ENCODE measurements at regions of chr10 and their contacts with region 1.

Region 1: DNA sequence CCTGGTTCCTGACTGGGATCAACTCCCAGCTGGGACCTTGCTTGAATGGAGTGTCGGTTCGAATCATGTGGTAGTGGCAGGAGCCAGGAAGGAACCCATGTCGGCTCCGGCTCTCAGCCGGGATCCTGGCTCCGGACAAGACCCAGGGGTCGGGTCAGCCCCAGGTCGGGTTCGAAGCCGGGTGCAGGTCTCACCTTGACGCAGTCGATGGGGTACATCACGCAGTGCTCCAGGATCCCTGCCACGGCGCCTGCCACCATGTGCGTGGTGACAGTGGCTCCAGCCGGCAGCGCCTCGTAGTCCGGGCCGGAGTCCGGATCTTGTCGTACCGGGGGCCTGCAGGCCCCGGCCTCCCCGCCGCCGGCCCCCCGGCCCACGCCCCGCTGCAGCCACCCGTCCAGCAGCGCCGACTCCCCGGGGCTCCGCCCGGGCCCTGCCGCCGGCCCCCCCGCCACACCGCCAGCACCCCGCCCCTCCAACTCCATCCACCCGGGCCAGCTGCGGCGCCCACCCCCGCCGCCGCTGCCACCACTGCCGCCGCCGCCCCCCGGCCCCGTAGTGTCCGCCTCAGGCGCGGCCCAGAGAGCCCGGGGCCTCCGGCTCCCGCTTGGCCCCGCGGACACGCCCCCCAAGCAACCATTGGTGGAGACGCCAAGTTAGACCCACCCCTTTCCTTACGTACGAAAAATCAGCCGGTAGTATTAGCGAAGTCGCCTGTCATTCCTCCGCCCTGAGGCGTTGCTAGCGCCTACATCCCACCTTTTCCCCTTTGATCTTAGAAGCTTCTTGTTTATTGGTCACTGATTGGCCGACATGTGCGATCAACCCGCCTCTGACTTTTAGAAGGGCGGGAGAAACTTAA is at the start of gene SLC25A28:
- DNase-seq: peak; percentile 95
- CTCF ChIP-seq: no peak

Region 2: DNA sequence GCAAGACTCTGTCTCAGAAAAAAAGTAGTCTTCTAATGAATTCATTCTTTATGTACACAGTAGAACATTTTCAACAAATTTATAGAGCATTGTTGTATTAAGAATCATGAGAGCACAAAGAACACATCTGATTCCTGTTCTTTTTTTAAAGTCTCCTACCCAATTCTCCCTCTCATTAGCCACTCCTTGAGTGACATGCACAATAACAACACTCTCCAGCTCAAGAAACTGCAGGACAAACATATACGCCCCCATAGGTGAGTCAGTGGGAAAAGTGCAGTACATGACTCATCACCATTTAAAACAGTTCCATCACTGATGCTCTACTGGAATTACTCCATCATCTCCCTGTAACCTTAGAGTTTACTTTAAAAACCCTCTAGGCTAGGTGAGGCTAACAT is 479.1 kb before region 1 on chr10:
- in situ Hi-C with region 1: no loop called
- DNase-seq: no peak
- CTCF ChIP-seq: no peak

Region 3: GRCh38 chr10:99395750-99396445 is 224.2 kb before region 1 on chr10:
- in situ Hi-C with region 1: loop called (anchors 10 kb)
- DNase-seq: no peak
- CTCF ChIP-seq: no peak

Region 4: DNA sequence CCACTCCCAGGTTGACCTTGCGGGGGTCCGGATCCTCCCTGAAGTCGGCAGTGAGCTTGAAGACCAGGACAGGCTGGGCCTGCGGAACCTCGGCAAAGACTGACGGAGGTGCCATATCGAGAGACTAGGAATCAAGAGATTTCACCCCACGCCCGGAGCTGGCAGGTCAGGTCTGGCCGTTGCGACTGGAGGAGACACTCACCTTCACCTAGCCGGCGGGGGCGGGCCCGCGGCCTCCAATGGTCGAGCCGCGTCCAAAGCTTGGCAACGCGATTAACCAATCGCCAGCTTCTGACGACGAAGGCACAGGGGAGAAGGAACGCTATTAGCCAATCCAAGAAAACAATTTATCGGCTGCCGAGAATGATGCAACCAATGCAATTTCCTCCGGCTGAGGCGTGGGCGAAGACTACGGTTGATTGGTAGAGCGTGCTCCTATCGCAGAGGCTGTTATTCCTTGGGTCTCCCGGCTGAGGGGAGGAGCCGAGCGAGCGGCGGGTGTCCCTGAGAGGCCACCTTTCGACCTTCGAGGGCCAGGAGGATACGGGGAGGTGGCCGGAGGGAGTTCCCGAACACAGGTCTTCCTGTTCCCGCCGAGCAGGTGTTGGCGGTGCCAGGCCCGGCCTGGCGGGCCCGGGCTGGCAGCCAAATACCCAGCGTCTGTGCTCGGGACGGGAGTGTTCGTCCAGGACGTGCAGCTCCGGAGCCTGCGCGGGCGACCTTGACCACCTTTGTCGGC is 189.5 kb before region 1 on chr10 and contains the start of gene GOT1:
- in situ Hi-C with region 1: loop called (anchors 10 kb)
- DNase-seq: peak; percentile 99
- CTCF ChIP-seq: peak; percentile 0

Region 5: GRCh38 chr10:99560277-99561126 is 59.6 kb before region 1 on chr10:
- in situ Hi-C with region 1: loop called (anchors 10 kb)
- DNase-seq: peak; percentile 50
- CTCF ChIP-seq: peak; percentile 58

Region 6: GRCh38 chr10:99827936-99828335 is 207.9 kb after region 1 on chr10:
- in situ Hi-C with region 1: no loop called
- DNase-seq: no peak
- CTCF ChIP-seq: no peak

Region 7: GRCh38 chr10:99906470-99906869 is 286.4 kb after region 1 on chr10:
- in situ Hi-C with region 1: no loop called
- DNase-seq: no peak
- CTCF ChIP-seq: no peak

Measured in GM13976 (cell line).